Aorta (tissue), 5 donors: ENCODE measurements at regions of chr13 and their contacts with region 1.

Region 1: GRCh38 chr13:44484562-44485138 is 91.5 kb downstream of the TSC22D1 start:
- DNase-seq: no peak
- ATAC-seq: no peak
- H3K4me3 ChIP-seq: no peak overlapping the region
- H3K27ac ChIP-seq: no peak overlapping the region
- H3K4me1 ChIP-seq: no peaks in the 10 kb centered on the region
- H3K27me3 ChIP-seq: no peaks in the 10 kb centered on the region

Region 2: GRCh38 chr13:44577236-44578066 is 92.8 kb after region 1 on chr13:
- intact Hi-C with region 1: loop called (anchors 5 to 10 kb)
- DNase-seq: peak; percentile 98 to 99
- ATAC-seq: peak; percentile 94
- H3K4me3 ChIP-seq: peak overlapping the region; percentile 95 to 97
- H3K27ac ChIP-seq: peak overlapping the region; percentile 95 to 96
- H3K4me1 ChIP-seq: peaks cover 3% of the 10 kb centered on the region in 2 donors
- H3K27me3 ChIP-seq: no peaks in the 10 kb centered on the region

Region 3: GRCh38 chr13:44719857-44720671 is 235.4 kb after region 1 on chr13:
- intact Hi-C with region 1: loop called in 1 of 2 experiments (anchors 10 kb)
- DNase-seq: peak in 1 of 2 donors; percentile 55
- ATAC-seq: peak; percentile 63
- H3K4me3 ChIP-seq: no peak overlapping the region
- H3K27ac ChIP-seq: peak overlapping the region; percentile 11 to 86
- H3K4me1 ChIP-seq: peaks cover 4 to 5% of the 10 kb centered on the region in 2 donors
- H3K27me3 ChIP-seq: no peaks in the 10 kb centered on the region

Region 4: DNA sequence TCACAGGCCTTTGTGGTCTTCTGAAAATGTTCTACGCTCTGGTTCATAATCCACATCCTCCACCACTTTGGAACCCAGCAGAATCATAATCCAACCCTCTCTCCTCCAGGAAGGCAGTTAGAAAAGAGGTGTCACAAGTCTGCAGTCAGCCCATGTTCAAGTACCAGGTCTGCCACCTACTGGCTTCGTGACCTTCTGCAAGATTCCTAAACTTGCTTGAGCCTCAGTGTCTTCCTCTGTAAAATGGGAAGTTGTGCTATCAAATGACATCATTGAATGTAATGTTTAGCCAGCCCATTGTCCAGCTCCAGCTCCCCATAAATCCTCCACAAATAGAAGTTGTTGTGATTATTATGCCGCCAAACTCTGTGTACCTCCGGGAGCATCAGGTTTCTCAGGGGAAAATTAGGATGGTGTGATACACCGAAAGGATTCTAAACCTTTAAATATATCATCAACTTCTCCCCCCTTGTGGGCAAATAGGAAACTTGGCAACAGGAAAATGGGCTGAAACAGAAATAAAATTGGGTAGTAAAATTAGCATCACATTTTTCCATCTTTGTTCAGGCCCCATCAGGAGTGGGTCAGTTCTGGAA is 394.9 kb after region 1 on chr13:
- intact Hi-C with region 1: loop called in 1 of 2 experiments (anchors 2 kb)
- DNase-seq: no peak
- ATAC-seq: no peak
- H3K4me3 ChIP-seq: no peak overlapping the region
- H3K27ac ChIP-seq: no peak overlapping the region
- H3K4me1 ChIP-seq: no peaks in the 10 kb centered on the region
- H3K27me3 ChIP-seq: no peaks in the 10 kb centered on the region

Region 5: DNA sequence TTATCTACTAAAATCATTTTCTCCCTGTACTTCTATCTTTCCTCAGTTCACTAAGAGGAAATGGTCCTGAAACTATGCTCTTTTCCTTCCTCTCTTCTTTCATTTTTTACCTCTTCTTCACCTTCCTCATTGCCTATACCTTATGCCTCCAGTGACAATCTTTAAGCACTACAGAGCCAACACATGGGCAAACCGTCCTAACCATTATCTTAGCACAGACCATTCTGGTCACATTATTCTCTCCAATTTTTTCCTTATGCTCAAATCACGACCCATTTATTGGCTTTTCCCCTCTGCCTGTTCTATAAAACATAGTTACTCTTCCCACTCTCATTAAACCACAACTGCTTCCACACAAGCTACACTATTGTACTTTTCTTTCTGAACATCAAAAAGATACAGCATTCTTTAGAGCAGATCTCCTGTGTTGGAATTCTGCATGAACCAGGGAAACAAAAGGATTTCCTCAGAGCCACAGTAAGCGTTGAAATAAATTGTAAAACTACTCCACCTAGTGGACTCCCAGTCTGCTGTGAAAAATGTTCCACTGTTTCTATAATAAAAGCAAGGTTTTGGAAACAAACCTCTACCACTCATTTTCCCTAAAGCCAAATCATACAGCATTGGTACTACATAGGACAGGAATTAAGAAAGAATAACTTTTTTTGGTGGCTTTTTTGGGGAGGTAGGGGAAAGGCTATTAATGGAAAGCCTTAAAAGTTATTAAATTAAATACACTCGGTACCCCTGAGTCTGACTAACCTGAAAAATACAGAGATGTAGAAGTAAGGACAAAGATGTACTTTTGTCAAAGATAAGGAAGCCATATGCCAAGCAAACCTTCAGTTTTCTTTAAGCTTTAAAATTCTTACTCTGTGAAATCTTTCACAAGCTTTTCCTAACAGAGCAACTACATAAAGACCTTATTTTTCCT is 485.2 kb after region 1 on chr13:
- intact Hi-C with region 1: loop called (anchors 5 kb)
- DNase-seq: no peak
- ATAC-seq: peak; percentile 73
- H3K4me3 ChIP-seq: no peak overlapping the region
- H3K27ac ChIP-seq: no peak overlapping the region
- H3K4me1 ChIP-seq: peaks cover 0 to 2% of the 10 kb centered on the region in 2 donors
- H3K27me3 ChIP-seq: no peaks in the 10 kb centered on the region

Region 6: DNA sequence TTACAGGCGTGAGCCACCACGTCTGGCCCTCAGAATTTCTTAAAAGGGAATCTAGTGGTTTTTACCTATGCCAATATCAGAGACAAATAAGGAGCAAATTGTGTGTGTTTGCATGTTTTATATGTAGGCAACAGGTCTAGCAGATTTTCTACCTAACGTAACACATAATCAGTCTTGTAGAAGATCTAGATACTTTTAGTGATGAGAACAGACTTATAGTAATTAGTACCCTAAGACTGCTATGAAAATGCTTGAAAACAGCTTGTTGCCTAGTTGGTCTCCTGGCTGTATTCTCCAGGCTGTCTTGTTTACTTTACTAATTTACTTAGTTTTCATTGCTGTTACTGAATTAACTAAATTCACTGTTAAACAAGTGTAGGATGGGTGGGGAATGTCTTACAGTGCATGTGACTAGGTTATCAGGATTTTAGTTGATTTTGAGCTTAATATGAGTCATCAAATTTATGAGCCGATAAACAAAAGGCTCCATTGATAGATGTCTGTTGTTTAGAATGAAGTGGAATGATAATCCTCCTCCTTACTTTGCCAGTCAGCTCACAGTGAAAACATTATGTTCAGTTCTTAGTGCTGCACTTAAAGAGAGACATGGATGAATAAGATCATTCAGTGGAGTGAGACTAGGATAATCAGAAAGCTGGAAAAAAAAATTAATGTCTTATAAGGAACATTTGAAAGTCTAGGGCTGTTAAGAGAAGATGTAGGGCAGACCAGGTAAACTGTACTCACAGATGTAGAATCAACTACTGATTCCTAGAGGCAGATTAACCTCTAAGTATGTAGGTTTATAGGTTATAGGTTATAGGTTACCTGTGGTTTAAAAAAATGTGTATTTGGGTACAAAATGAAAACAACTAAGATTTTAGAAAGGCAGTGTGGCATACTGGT is 658.0 kb after region 1 on chr13:
- intact Hi-C with region 1: no loop called
- DNase-seq: no peak
- ATAC-seq: no peak
- H3K4me3 ChIP-seq: no peak overlapping the region
- H3K27ac ChIP-seq: no peak overlapping the region
- H3K4me1 ChIP-seq: no peaks in the 10 kb centered on the region
- H3K27me3 ChIP-seq: no peaks in the 10 kb centered on the region